Left cardiac atrium (tissue), 4 donors: ENCODE measurements at regions of chr15 and their contacts with region 1.

Region 1: DNA sequence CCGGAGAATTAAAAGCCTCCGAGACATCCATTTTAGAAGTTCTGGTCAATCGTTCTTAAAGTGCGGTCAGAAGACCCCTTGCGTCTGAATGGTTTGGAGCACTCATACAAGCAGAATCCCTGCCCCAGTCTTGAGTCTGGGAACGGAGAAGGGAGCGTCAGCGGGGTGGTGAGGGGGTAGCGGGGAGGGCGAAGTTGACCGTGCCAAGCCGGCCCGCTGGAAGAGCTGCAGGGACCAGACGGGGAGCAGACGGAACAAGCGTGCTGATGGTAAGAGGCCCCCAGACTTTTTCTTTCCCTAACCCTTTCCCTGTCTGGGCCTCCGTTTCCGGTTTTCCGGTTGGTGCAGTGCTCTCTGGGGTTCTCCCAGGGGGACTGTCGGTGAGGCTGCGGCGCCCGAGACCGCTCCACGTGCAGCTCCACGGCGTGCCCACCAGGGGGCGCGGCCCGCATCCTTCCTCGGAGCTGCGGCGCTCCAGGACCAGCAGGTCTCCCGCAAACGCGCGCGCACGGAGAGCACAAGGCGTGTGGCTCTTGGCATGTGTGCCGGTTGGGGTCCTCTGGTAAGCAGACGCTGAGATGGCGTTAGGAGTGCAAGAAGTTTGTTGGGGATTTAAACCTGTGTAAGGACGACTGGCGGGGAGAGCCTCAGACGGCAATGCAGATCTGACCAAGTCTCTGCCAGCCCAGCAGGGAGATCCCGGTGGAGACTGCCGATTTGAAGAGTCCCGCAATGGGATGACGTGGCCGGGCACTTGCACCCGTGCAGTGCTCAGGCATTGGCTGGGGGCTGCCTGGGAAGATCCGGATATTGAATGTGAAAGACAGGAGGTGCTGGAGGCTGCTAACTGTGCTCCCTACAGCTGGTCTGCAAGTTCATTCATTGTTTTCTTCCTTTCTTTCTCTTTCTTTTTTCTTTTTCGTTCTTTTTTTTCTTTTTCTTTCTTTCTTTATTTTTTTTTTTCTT is 19.2 kb upstream of the CORO2B start:
- DNase-seq: peak; percentile 83
- ATAC-seq: peak; percentile 95

Region 2: DNA sequence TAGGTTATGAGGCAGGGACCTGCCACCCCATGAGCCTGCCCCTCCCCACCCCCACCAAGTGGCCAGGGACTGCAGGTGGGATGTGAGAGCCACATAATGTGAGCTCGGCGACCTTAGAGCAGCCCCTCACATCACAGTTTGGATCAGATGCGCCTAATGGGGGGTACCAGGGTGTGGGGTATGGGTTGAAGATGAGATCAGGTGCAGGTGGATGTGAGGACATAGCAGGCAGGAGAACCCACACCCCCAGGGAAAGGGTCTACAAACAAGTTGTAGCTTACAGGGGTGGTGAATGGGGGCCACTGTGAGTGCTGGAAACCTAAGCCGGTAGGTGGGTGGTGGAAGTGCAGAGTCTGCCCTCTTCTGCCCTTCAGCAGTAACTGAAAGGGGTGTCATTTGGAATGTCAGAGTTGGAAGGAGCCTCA is 113.2 kb after region 1 on chr15:
- intact Hi-C with region 1: loop called (anchors 2 to 5 kb)
- DNase-seq: no peak
- ATAC-seq: no peak

Region 3: GRCh38 chr15:68768321-68768720 is 208.7 kb after region 1 on chr15:
- intact Hi-C with region 1: no loop called
- DNase-seq: no peak
- ATAC-seq: no peak

Region 4: GRCh38 chr15:68820295-68821189 is 260.9 kb after region 1 on chr15 and contains the start of gene ANP32A:
- intact Hi-C with region 1: loop called in 1 of 2 experiments (anchors 5 kb)
- DNase-seq: peak; percentile 98
- ATAC-seq: peak; percentile 84 to 87
- total RNA-seq, gene ANP32A: 106 to 118 TPM